Heart left ventricle (tissue), 16 donors: ENCODE measurements at regions of chr2 and their contacts with region 1.

Region 1: DNA sequence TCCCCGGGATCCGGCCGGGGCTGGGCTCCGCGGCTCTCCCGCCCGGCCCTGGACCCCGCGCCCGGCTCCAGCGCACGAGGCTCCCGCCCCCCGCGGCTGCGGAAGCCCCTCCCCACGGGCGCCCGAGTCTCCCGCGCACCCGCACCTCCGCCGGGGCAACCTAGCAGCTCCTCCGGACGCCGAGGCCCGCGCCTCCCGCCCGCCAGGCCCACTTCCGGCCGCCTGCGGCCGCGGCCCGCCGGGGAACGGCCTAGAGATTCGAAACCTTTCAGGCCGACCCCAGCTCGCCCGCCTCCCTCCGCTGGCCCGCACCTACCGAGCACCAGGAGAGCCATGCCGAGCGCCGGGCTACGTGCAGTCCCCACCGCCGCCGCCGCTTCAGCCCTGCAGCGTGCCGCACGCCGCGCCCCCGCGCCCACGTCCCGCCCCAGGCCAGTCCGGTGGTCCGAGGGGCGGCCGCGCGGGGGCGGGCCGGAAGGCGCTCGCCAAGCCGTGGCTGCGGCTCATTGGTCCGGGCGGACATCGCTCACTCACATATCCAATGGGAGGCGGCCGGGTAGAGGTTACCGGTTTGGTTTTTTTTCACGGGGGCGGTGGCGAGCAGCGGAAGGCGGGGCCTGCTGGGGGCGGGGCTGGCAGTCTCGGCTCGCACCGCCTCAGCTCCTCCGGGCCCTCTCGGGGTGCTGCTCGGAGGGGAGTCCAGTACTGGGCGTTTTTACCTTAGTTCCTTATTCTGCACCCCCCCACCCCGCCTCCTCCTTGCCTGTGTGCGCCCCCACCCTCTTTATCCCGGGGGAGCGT is at the start of gene PDIA6:
- DNase-seq: peak; percentile 98 to 99 (median 98)
- ATAC-seq: peak; percentile 93 to 99 (median 98)
- H3K4me3 ChIP-seq: peak within 1 kb of the TSS; percentile 76 to 96 (median 92)
- H3K27ac ChIP-seq: peak within 1 kb of the TSS; percentile 74 to 95 (median 92)
- H3K4me1 ChIP-seq: peaks cover 0 to 48% (median 30%) of the 10 kb centered on the region in 12 donors
- H3K27me3 ChIP-seq: no peaks in the 10 kb centered on the region
- CTCF ChIP-seq: peak in 4 of 12 donors; percentile 11 to 28 (median 20)
- POLR2A ChIP-seq: peak in 1 of 2 donors; percentile 84
- total RNA-seq, gene PDIA6: 78.2 to 178 (median 110) TPM

Region 2: GRCh38 chr2:10700078-10700803 is 112.3 kb before region 1 on chr2:
- intact Hi-C with region 1: no loop called
- DNase-seq: no peak
- ATAC-seq: no peak
- H3K4me3 ChIP-seq: no peak overlapping the region
- H3K27ac ChIP-seq: no peak overlapping the region
- H3K4me1 ChIP-seq: no peaks in the 10 kb centered on the region
- H3K27me3 ChIP-seq: no peaks in the 10 kb centered on the region
- CTCF ChIP-seq: no peak
- POLR2A ChIP-seq: no peak

Region 3: DNA sequence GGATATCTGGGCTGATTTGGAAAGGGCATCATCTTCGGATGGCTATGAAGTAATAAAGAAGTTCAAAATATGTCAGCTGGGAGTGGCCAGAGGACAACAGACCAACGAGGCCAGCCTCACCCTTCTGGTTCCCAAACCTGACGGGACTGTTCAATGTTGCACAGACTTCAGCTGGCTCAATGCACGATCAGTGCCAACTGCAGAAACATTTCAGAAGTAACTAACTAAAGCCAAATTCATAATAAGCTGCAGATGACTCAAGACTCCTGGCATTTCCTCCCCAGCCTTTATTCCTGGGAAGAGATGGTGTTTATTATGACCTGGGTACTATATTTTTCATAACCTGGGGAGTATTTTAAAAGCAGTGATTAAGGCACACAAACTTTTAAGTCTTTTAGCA is 94.9 kb before region 1 on chr2:
- intact Hi-C with region 1: loop called in 1 of 10 experiments (anchors 10 kb)
- DNase-seq: no peak
- ATAC-seq: no peak
- H3K4me3 ChIP-seq: no peak overlapping the region
- H3K27ac ChIP-seq: no peak overlapping the region
- H3K4me1 ChIP-seq: peaks cover 0 to 18% (median 9%) of the 10 kb centered on the region in 12 donors
- H3K27me3 ChIP-seq: peaks cover 14 to 31% (median 23%) of the 10 kb centered on the region in 9 donors
- CTCF ChIP-seq: no peak
- POLR2A ChIP-seq: no peak

Region 4: DNA sequence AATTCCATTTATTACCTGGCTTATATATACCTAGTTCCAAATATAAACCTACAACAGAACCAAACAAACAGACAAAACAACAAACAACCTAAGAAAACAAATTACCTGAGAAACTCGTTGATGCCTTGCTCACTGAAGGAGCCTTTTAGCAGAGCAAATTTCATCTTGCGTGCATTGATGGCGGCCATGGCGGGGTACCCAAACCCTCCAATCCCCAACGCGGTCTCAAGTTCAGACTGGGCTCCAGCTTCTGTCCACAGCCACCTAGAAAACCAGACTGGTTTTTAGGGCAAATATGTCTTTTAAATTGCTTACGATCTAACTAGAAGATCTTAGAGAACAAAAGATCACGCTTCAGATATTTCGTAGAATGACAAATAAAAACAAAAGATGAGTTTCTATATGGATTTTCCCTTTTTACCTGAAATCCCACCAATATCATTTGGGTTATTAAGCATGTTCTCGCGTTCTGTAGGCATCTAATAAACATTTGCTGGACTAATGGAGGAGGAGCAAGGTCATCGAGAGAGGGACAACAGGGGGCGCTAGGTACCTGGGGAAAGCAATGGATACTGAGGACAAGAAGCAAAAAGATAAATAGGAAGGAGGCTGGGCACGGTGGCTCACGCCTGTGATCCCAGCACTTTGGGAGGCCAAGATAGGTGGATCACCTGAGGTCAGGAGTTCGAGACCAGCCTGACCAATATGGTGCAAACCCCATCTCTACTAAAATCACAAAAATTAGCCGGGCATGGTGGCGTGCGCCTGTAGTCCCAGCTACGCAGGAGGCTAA is 25.2 kb before region 1 on chr2:
- intact Hi-C with region 1: loop called in 1 of 10 experiments (anchors 1 kb)
- DNase-seq: peak in 1 of 5 donors; percentile 47
- ATAC-seq: no peak
- H3K4me3 ChIP-seq: no peak overlapping the region
- H3K27ac ChIP-seq: no peak overlapping the region
- H3K4me1 ChIP-seq: peaks cover 0 to 5% (median 0%) of the 10 kb centered on the region in 12 donors
- H3K27me3 ChIP-seq: no peaks in the 10 kb centered on the region
- CTCF ChIP-seq: peak in 2 of 12 donors; percentile 11 to 15
- POLR2A ChIP-seq: no peak

Region 5: DNA sequence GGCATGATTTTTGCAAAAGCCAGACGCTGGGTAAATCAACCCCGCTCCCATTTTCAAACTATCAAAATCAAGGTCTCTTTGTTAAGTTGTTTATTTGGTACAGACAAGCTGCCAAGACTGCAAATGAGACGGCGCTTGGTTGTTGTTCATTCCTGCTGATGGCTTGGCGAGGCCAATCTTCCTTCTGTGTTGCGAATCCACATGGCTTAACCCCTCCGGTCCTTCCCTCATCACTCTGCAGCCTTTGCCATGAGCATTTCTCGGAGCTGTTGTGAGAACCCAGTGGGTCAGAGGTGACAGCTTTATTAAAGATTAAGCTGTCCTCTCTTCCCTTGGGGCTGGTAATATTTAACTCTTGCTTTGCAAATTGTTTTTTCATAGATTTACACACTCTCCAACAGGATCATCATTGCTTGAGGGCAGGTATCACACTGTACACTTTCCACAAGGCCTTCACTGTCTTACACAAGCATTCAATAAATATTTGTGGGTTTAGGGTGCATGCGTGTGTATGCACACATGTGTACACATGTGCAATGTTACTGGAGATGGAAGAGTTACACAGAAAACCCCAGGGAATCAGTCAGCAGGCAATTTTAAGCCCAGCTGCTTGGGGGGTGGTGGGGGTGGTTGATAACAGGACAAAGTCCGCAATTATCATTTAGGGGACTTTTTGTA is 71.4 kb after region 1 on chr2:
- intact Hi-C with region 1: no loop called
- DNase-seq: no peak
- ATAC-seq: no peak
- H3K4me3 ChIP-seq: no peak overlapping the region
- H3K27ac ChIP-seq: peak overlapping the region in 1 of 12 donors; percentile 2
- H3K4me1 ChIP-seq: peaks cover 0 to 24% (median 13%) of the 10 kb centered on the region in 12 donors
- H3K27me3 ChIP-seq: no peaks in the 10 kb centered on the region
- CTCF ChIP-seq: no peak
- POLR2A ChIP-seq: no peak

Region 6: GRCh38 chr2:11465497-11466406 is 653.2 kb after region 1 on chr2 and contains the start of gene E2F6:
- intact Hi-C with region 1: loop called in 2 of 10 experiments (anchors 10 kb)
- DNase-seq: peak; percentile 94 to 96 (median 95)
- ATAC-seq: peak; percentile 91 to 96 (median 94)
- H3K4me3 ChIP-seq: peak within 1 kb of the TSS; percentile 56 to 85 (median 68)
- H3K27ac ChIP-seq: peak within 1 kb of the TSS; percentile 75 to 94 (median 90)
- H3K4me1 ChIP-seq: peaks cover 2 to 48% (median 36%) of the 10 kb centered on the region in 12 donors
- H3K27me3 ChIP-seq: no peaks in the 10 kb centered on the region
- CTCF ChIP-seq: peak in 1 of 12 donors; percentile 17
- POLR2A ChIP-seq: peak in 1 of 2 donors; percentile 72
- total RNA-seq, gene E2F6: 12.6 to 20.4 (median 15.8) TPM